ENCODE measurements at regions of chr3 and their contacts with region 1.

Region 1: GRCh38 chr3:161142486-161142885 is 37.3 kb upstream of the B3GALNT1 start:
- DNase-seq: no peak
- H3K4me3 ChIP-seq: no peak overlapping the region
- H3K27ac ChIP-seq: no peak overlapping the region
- H3K4me1 ChIP-seq: no peaks in the 10 kb centered on the region
- H3K27me3 ChIP-seq: no peaks in the 10 kb centered on the region
- CTCF ChIP-seq: no peak

Region 2: GRCh38 chr3:161096771-161097355 is 45.6 kb before region 1 on chr3:
- CTCF ChIA-PET with region 1: interaction called, 12 read pairs
- POLR2A ChIA-PET with region 1: no interaction called
- intact Hi-C with region 1: no loop called
- DNase-seq: no peak
- H3K4me3 ChIP-seq: no peak overlapping the region
- H3K27ac ChIP-seq: no peak overlapping the region
- H3K4me1 ChIP-seq: no peaks in the 10 kb centered on the region
- H3K27me3 ChIP-seq: no peaks in the 10 kb centered on the region
- CTCF ChIP-seq: peak; percentile 34; the same call in 1 of the 2 replicates